Right ventricle myocardium superior (tissue), 1 donor: ENCODE measurements at regions of chr12 and their contacts with region 1.

Region 1: GRCh38 chr12:123519141-123520001 is 14.1 kb downstream of the RILPL1 start:
- DNase-seq: peak; percentile 79
- ATAC-seq: peak; percentile 76

Region 2: DNA sequence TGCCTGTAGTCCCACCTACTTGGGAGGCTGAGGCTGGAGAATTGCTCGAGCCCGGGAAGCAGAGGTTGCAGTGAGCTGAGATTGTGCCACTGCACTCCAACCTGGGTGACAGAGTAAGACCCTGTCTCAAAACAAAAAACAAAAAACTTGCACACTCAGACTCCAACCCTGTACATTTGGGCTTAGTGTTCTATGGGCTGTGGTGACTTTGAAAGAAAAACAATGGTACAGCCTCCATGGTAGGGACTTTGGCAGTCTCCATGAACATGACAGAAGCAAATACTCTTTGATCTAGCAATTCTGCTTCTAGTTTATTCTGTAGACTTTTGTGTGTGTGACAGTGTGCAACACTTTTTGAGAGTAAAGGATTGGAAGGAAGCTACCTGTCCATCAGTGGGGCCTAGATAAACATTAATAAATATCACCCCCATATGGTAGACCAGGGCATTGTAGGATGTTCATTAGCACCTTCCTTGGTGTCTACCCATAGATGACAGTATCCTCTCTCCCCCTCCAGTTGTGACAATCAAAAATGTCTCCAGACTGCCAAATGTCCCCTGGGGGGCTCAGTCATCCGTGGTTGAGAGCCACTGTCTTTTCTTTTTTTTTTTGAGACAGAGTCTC is 50.7 kb before region 1 on chr12:
- intact Hi-C with region 1: no loop called
- DNase-seq: no peak
- ATAC-seq: no peak

Region 3: GRCh38 chr12:123479442-123480180 is 39.8 kb before region 1 on chr12:
- intact Hi-C with region 1: loop called (anchors 5 kb)
- DNase-seq: no peak
- ATAC-seq: peak; percentile 42